ENCODE measurements at regions of chr21 and their contacts with region 1.

Region 1: DNA sequence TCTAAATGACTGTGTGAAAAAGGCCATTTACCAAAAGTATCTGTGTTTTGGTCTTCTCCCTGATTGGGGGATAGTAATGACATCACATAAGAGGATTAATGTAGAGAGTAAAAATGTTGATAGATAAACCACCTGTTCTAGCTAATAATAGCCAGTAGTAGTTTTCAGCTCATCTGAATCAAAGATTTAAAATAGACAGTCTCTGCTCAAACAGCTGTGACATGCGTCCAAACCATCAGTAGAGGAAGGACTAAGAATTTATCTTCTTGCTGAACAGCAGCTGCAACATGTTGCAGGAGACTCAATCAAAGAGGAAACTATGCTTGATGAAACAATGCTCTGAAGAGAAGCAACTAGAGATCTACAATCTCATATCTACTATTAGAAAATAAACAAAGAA is 21.4 kb downstream of the TMPRSS15 start:
- DNase-seq: peak; percentile 78
- H3K4me3 ChIP-seq: peak overlapping the region; percentile 24
- H3K27ac ChIP-seq: peak overlapping the region; percentile 86
- H3K4me1 ChIP-seq: peaks cover 30% of the 10 kb centered on the region
- CTCF ChIP-seq: no peak

Region 2: GRCh38 chr21:18460979-18461378 is 78.8 kb after region 1 on chr21:
- CTCF ChIA-PET with region 1: no interaction called
- POLR2A ChIA-PET with region 1: no interaction called
- intact Hi-C with region 1: loop called (anchors 1 kb)
- DNase-seq: peak; percentile 92
- H3K4me3 ChIP-seq: peak overlapping the region; percentile 42
- H3K27ac ChIP-seq: peak overlapping the region; percentile 96
- H3K4me1 ChIP-seq: peaks cover 35% of the 10 kb centered on the region
- CTCF ChIP-seq: no peak